ENCODE measurements at regions of chr20 and their contacts with region 1.

Region 1: DNA sequence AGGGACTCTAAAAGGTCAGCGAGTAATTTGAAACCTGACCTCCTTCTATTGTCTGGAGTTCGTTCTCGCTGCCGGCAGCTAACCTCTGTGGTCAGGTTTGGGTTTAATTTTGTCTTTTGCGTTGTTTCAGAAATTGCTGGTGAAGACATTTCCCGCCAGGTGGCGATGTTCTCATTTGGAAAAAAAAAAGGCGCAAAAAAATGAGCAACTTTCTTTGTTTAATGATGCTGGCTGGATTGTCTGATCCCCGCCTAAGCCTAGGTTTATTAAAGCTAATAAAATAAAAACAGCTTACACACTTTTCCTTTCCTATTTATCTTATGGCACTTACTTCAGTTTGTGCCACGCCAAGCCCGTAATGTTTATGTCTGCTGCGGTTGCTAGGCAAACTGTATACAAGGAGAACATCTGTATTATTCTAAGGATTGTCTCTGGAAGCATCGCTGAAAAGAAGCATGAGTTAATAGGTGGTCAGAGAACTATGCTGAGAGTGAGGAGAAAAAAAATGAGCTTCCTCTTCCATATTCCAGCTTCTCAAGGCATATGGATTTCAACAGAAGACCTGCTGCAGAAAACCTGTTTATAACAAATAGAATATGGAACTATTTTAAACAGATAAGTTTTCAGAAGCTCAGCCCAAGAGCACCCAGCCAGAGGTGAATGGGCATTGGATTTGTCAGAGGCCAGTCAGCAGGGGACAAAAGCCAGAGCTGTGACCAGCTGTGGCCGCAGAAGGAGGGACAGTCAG is 205.7 kb downstream of the DOK5 start:
- DNase-seq: no peak
- H3K4me3 ChIP-seq: no peak overlapping the region
- H3K27me3 ChIP-seq: no peaks in the 10 kb centered on the region
- CTCF ChIP-seq: peak; percentile 61

Region 2: GRCh38 chr20:54668271-54669039 is 12.6 kb before region 1 on chr20:
- CTCF ChIA-PET with region 1: interaction called, 14 read pairs
- POLR2A ChIA-PET with region 1: no interaction called
- DNase-seq: no peak
- H3K4me3 ChIP-seq: no peak overlapping the region
- H3K27me3 ChIP-seq: no peaks in the 10 kb centered on the region
- CTCF ChIP-seq: peak; percentile 70

Region 3: DNA sequence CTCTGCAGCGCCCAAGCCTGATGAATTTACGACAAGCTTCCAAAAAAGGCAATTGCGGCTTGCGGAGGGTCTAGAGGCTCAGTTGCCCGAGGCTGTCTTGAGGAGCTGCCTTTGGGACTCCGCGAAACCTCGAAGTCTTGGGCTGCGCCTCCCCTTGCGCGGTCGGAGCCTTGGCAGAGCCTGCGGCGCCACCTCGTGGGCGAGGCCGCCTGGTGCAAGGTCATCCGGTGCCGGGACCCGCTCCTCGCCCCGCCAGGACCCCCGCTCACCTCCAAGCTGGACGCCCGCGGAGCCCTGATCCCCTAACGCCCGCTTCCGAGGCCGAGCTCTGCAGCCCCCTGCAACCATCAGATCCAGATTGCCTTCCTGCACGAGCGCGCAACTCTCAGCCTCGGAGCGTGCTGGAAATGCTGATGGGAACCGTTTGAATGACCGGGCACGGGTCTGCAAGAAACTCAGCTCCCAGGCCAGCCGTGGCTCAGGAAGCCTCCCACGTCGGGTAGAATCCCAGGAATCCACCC is 1662.9 kb after region 1 on chr20:
- CTCF ChIA-PET with region 1: interaction called, 20 read pairs
- POLR2A ChIA-PET with region 1: no interaction called
- DNase-seq: no peak
- H3K4me3 ChIP-seq: 0 out of 2 replicates have a peak overlapping the region, but pooled peaks have one; percentile 0
- H3K27me3 ChIP-seq: peaks cover 7% of the 10 kb centered on the region; the same call in 1 of the 2 replicates
- CTCF ChIP-seq: peak; percentile 78

Measured in BJ (cell line).